ENCODE measurements at regions of chr1 and their contacts with region 1.

Region 1: GRCh38 chr1:6554031-6554906 is at the start of gene NOL9:
- DNase-seq: peak; percentile 73 to 99
- H3K4me3 ChIP-seq: peak within 1 kb of the TSS; percentile 66 to 97 (median 90)
- H3K27ac ChIP-seq: peak within 1 kb of the TSS; percentile 86
- H3K4me1 ChIP-seq: peaks cover 3 to 6% (median 5%) of the 10 kb centered on the region in 4 experiments; a peak in 5 of 7 replicates
- H3K27me3 ChIP-seq: no peaks in the 10 kb centered on the region
- CTCF ChIP-seq: peak; percentile 85 to 93 (median 87)
- EP300 ChIP-seq: no peak
- POLR2A ChIP-seq: peak; percentile 54 to 87
- RAD21 ChIP-seq: peak; percentile 47 to 60
- total RNA-seq, gene NOL9: 38.1 and 42.9 TPM in 2 replicates

Region 2: GRCh38 chr1:6574025-6574620 is 19.9 kb after region 1 on chr1:
- CTCF ChIA-PET with region 1: interaction called, 23 read pairs
- POLR2A ChIA-PET with region 1: interaction called, 6 read pairs
- DNase-seq: no peak
- H3K4me3 ChIP-seq: no peak overlapping the region
- H3K27ac ChIP-seq: no peak overlapping the region
- H3K4me1 ChIP-seq: peaks cover 0 to 9% (median 6%) of the 10 kb centered on the region in 4 experiments; a peak in 6 of 7 replicates
- H3K27me3 ChIP-seq: peaks cover 0 to 2% (median 0%) of the 10 kb centered on the region in 4 experiments; a peak in 3 of 7 replicates
- CTCF ChIP-seq: no peak
- EP300 ChIP-seq: no peak
- POLR2A ChIP-seq: no peak
- RAD21 ChIP-seq: no peak

Region 3: DNA sequence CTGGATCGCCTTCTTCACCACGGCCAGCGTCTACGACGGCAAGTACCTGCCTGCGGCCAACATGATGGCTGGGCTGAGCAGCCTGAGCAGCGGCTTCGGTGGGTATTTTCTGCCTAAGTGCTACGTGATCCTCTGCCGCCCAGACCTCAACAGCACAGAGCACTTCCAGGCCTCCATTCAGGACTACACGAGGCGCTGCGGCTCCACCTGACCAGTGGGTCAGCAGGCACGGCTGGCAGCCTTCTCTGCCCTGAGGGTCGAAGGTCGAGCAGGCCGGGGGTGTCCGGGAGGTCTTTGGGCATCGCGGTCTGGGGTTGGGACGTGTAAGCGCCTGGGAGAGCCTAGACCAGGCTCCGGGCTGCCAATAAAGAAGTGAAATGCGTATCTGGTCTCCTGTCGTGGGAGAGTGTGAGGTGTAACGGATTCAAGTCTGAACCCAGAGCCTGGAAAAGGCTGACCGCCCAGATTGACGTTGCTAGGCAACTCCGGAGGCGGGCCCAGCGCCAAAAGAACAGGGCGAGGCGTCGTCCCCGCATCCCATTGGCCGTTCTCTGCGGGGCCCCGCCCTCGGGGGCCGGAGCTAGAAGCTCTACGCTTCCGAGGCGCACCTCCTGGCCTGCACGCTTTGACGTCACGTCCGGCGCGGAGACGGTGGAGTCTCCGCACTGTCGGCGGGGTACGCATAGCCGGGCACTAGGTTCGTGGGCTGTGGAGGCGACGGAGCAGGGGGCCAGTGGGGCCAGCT is 25.3 kb after region 1 on chr1 and contains the start of gene ZBTB48:
- CTCF ChIA-PET with region 1: interaction called, 23 read pairs
- POLR2A ChIA-PET with region 1: interaction called, 6 read pairs
- DNase-seq: peak; percentile 82 to 96
- H3K4me3 ChIP-seq: peak within 1 kb of the TSS; percentile 66 to 75 (median 72)
- H3K27ac ChIP-seq: peak within 1 kb of the TSS; percentile 6; the same call in 1 of the 2 replicates
- H3K4me1 ChIP-seq: peaks cover 0 to 17% (median 13%) of the 10 kb centered on the region in 4 experiments; a peak in 6 of 7 replicates
- H3K27me3 ChIP-seq: no peaks in the 10 kb centered on the region; a peak in 2 of 7 replicates
- CTCF ChIP-seq: no peak; a peak in 1 of 4 replicates
- EP300 ChIP-seq: no peak
- POLR2A ChIP-seq: peak in 1 of 2 experiments; percentile 92; a peak in 2 of 3 replicates
- RAD21 ChIP-seq: no peak
- total RNA-seq, gene ZBTB48: 21.4 and 28.2 TPM in 2 replicates

Region 4: DNA sequence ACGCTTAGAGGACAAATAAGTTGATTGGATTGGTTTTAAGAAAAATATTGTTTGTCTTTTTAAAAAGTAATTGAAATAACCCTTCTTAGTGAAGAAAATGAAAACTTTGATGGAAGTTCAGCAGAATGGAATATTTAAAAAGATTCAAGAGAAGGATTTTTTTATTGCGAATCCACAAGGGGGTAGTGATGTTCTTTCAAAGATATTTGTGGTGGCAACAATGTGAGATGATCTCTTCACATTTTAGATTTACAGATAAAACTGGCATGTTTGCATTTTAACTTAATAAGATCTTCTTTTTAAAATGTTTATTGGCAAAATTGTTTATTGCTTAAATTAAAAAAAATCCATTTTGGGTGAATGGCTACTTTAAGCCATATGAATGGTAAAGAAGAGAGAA is 239.9 kb after region 1 on chr1:
- CTCF ChIA-PET with region 1: no interaction called
- POLR2A ChIA-PET with region 1: no interaction called
- DNase-seq: no peak
- H3K4me3 ChIP-seq: no peak overlapping the region
- H3K27ac ChIP-seq: no peak overlapping the region
- H3K4me1 ChIP-seq: no peaks in the 10 kb centered on the region; a peak in 1 of 7 replicates
- H3K27me3 ChIP-seq: no peaks in the 10 kb centered on the region
- CTCF ChIP-seq: peak in 2 of 3 experiments; percentile 8 to 25; a peak in 2 of 4 replicates
- EP300 ChIP-seq: no peak
- POLR2A ChIP-seq: no peak
- RAD21 ChIP-seq: peak; percentile 48 to 65

Measured in H1 (cell line).